Natural killer cell (primary cell): ENCODE measurements at regions of chr21 and their contacts with region 1.

Region 1: GRCh38 chr21:33127154-33127893 is 57.4 kb downstream of the OLIG1 start:
- DNase-seq: peak; percentile 53 to 72
- ATAC-seq: peak; percentile 78 to 92 (median 81)
- H3K4me3 ChIP-seq: no peak overlapping the region
- H3K4me3 Mint-ChIP-seq: peak overlapping the region; percentile 47
- H3K27ac ChIP-seq: no peak overlapping the region
- H3K27ac Mint-ChIP-seq: no peak overlapping the region
- H3K4me1 ChIP-seq: peaks cover 15% of the 10 kb centered on the region
- H3K4me1 Mint-ChIP-seq: peaks cover 7 to 8% of the 10 kb centered on the region in 2 donors
- H3K27me3 ChIP-seq: peaks cover 7% of the 10 kb centered on the region
- H3K27me3 Mint-ChIP-seq: peaks cover 37 to 50% of the 10 kb centered on the region in 2 donors
- CTCF ChIP-seq: peak; percentile 88

Region 2: GRCh38 chr21:32834916-32835235 is 292.4 kb before region 1 on chr21:
- intact Hi-C with region 1: loop called (anchors 2 kb)
- DNase-seq: no peak
- ATAC-seq: no peak
- H3K4me3 ChIP-seq: no peak overlapping the region
- H3K4me3 Mint-ChIP-seq: no peak overlapping the region
- H3K27ac ChIP-seq: no peak overlapping the region
- H3K27ac Mint-ChIP-seq: no peak overlapping the region
- H3K4me1 ChIP-seq: no peaks in the 10 kb centered on the region
- H3K4me1 Mint-ChIP-seq: no peaks in the 10 kb centered on the region
- H3K27me3 ChIP-seq: peaks cover 2% of the 10 kb centered on the region
- H3K27me3 Mint-ChIP-seq: peaks cover 12% of the 10 kb centered on the region in 2 donors
- CTCF ChIP-seq: no peak

Region 3: GRCh38 chr21:32921632-32922230 is 205.6 kb before region 1 on chr21:
- intact Hi-C with region 1: loop called (anchors 1 kb)
- DNase-seq: peak; percentile 47 to 68
- ATAC-seq: peak; percentile 50 to 60 (median 55)
- H3K4me3 ChIP-seq: no peak overlapping the region
- H3K4me3 Mint-ChIP-seq: no peak overlapping the region
- H3K27ac ChIP-seq: no peak overlapping the region
- H3K27ac Mint-ChIP-seq: no peak overlapping the region
- H3K4me1 ChIP-seq: peaks cover 9% of the 10 kb centered on the region
- H3K4me1 Mint-ChIP-seq: peaks cover 20 to 23% of the 10 kb centered on the region in 2 donors
- H3K27me3 ChIP-seq: no peaks in the 10 kb centered on the region
- H3K27me3 Mint-ChIP-seq: peaks cover 8 to 13% of the 10 kb centered on the region in 2 donors
- CTCF ChIP-seq: peak; percentile 75

Region 4: DNA sequence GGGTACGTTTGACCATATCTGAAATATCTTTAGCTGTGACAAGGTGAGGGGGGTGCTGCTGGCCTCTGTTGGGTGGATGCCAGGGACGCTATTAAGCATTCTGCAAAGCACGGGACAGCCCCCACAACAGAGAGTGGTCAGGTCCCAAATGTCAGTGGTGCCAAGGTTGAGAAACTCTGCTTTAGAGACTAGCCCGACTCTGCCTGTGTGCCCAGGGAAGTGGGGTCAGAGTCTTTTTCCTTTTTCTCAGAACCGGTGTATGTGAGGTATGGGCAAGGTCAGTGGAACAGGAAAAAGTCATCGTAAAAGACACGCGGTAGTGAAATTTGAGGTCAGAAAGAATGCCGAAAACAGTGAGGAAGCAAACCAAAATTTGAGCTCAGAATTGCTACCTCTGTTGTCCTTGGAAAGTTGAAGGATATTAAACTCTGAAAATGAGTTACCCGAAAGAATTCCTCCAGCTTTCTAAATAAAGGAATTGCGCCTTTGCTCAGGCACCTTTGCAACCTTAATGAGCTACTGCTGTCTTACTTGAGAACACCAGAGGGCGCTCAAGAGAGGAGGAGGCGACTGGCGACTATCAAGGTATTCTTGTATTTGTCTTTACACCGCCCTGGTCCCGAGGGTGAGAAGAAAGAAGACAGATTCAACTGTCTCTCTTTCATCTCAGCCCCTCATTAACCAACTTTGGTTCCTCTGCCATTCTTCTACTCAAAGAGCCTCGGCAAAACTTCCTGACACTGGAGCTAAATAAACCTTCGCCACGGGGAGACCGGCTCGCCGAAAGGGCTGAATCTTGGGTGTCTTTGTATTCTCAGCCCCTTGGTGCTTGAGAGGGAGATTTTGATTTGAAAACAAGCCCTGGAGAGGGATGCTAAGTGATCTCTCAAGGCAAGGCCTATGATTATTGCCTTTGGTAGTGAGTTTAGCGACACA is 187.0 kb before region 1 on chr21:
- intact Hi-C with region 1: loop called (anchors 5 kb)
- DNase-seq: peak in 1 of 2 donors; percentile 82
- ATAC-seq: peak; percentile 54 to 75 (median 74)
- H3K4me3 ChIP-seq: no peak overlapping the region
- H3K4me3 Mint-ChIP-seq: no peak overlapping the region
- H3K27ac ChIP-seq: no peak overlapping the region
- H3K27ac Mint-ChIP-seq: no peak overlapping the region
- H3K4me1 ChIP-seq: peaks cover 3% of the 10 kb centered on the region
- H3K4me1 Mint-ChIP-seq: peaks cover 15 to 17% of the 10 kb centered on the region in 2 donors
- H3K27me3 ChIP-seq: no peaks in the 10 kb centered on the region
- H3K27me3 Mint-ChIP-seq: peaks cover 4 to 5% of the 10 kb centered on the region in 2 donors
- CTCF ChIP-seq: peak; percentile 79

Region 5: DNA sequence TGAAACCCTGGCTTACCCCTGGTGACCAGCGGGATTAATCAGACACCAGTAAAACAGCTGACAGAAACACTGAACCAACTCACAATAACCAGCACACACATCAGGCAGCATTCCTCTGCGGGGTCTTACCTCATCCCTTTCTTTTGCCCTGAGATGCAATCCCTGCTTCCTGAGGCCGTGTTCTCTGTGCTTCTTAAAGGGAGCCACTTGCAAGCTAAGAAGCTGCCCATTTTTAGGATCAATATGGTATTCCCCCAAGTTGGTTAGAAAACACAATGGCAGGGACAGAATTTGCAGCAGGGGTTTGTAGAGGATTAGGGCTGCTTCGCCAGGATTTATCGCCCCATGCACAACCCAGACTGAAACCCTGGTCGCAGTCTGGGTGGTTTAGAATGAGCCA is 176.3 kb before region 1 on chr21:
- intact Hi-C with region 1: no loop called
- DNase-seq: no peak
- ATAC-seq: no peak
- H3K4me3 ChIP-seq: no peak overlapping the region
- H3K4me3 Mint-ChIP-seq: no peak overlapping the region
- H3K27ac ChIP-seq: no peak overlapping the region
- H3K27ac Mint-ChIP-seq: no peak overlapping the region
- H3K4me1 ChIP-seq: no peaks in the 10 kb centered on the region
- H3K4me1 Mint-ChIP-seq: peaks cover 5 to 10% of the 10 kb centered on the region in 2 donors
- H3K27me3 ChIP-seq: peaks cover 5% of the 10 kb centered on the region
- H3K27me3 Mint-ChIP-seq: peaks cover 20 to 23% of the 10 kb centered on the region in 2 donors
- CTCF ChIP-seq: no peak

Region 6: GRCh38 chr21:32994305-32994704 is 133.0 kb before region 1 on chr21:
- intact Hi-C with region 1: loop called (anchors 2 kb)
- DNase-seq: peak in 1 of 2 donors; percentile 27
- ATAC-seq: no peak
- H3K4me3 ChIP-seq: no peak overlapping the region
- H3K4me3 Mint-ChIP-seq: no peak overlapping the region
- H3K27ac ChIP-seq: no peak overlapping the region
- H3K27ac Mint-ChIP-seq: no peak overlapping the region
- H3K4me1 ChIP-seq: no peaks in the 10 kb centered on the region
- H3K4me1 Mint-ChIP-seq: peaks cover 0 to 10% of the 10 kb centered on the region in 2 donors
- H3K27me3 ChIP-seq: no peaks in the 10 kb centered on the region
- H3K27me3 Mint-ChIP-seq: peaks cover 35 to 53% of the 10 kb centered on the region in 2 donors
- CTCF ChIP-seq: peak; percentile 12

Region 7: GRCh38 chr21:33025489-33026442 is 101.6 kb before region 1 on chr21 and contains the start of gene OLIG2:
- intact Hi-C with region 1: loop called (anchors 10 kb)
- DNase-seq: no peak
- ATAC-seq: no peak
- H3K4me3 ChIP-seq: no peak within 1 kb of the TSS
- H3K4me3 Mint-ChIP-seq: peak within 1 kb of the TSS; percentile 78
- H3K27ac ChIP-seq: no peak within 1 kb of the TSS
- H3K27ac Mint-ChIP-seq: peak within 1 kb of the TSS; percentile 42 to 80
- H3K4me1 ChIP-seq: peaks cover 73% of the 10 kb centered on the region
- H3K4me1 Mint-ChIP-seq: peaks cover 51 to 62% of the 10 kb centered on the region in 2 donors
- H3K27me3 ChIP-seq: peaks cover 94% of the 10 kb centered on the region
- H3K27me3 Mint-ChIP-seq: peaks cover 63 to 72% of the 10 kb centered on the region in 2 donors
- CTCF ChIP-seq: no peak
- total RNA-seq, gene OLIG2: not detected